Caco-2 (cell line): ENCODE measurements at regions of chr1 and their contacts with region 1.

Region 1: DNA sequence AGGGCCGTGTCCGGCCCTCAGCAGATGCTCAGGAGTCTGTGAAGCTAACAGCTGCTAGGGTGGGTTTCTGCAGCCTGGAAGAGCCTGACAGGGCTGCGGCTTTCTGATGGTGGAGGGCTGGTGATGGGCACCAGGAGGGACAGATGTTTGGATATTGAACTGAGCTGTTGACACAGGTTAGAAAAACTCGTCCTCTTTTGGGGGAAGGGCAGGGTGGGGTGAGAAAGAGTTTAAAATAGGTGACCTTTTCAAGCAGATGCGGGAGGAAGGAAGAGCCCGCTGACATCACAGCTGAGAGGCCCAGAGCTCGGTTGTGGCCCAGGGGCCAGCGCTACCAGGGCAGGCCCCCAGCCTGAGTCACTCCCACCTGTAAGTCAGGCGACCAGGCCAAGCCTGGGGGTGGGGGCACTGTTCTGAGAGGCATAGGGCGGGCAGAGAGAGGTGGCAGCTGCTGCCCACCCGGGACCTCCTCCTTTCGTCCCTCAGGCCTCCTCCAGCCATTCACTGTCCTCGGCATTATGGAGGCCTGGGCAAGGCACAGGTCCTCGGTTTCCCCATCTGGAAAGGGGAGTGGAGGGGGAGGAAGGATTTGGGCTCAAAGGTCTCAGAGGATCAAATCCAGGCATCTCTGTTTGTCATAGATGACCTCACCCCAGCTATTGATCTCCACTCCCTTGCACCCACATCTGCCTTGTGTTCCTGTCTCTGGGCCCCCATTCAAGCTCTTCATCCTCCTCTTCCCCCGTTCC is 32.3 kb upstream of the ID3 start:
- DNase-seq: no peak
- H3K4me3 ChIP-seq: no peak overlapping the region
- H3K4me3 Mint-ChIP-seq: no peak overlapping the region
- H3K27ac Mint-ChIP-seq: peak overlapping the region; percentile 13
- H3K4me1 ChIP-seq: peaks cover 12% of the 10 kb centered on the region; the same call in 1 of the 2 replicates
- H3K4me1 Mint-ChIP-seq: peaks cover 10% of the 10 kb centered on the region
- H3K27me3 ChIP-seq: no peaks in the 10 kb centered on the region
- H3K27me3 Mint-ChIP-seq: no peaks in the 10 kb centered on the region
- CTCF ChIP-seq: no peak

Region 2: DNA sequence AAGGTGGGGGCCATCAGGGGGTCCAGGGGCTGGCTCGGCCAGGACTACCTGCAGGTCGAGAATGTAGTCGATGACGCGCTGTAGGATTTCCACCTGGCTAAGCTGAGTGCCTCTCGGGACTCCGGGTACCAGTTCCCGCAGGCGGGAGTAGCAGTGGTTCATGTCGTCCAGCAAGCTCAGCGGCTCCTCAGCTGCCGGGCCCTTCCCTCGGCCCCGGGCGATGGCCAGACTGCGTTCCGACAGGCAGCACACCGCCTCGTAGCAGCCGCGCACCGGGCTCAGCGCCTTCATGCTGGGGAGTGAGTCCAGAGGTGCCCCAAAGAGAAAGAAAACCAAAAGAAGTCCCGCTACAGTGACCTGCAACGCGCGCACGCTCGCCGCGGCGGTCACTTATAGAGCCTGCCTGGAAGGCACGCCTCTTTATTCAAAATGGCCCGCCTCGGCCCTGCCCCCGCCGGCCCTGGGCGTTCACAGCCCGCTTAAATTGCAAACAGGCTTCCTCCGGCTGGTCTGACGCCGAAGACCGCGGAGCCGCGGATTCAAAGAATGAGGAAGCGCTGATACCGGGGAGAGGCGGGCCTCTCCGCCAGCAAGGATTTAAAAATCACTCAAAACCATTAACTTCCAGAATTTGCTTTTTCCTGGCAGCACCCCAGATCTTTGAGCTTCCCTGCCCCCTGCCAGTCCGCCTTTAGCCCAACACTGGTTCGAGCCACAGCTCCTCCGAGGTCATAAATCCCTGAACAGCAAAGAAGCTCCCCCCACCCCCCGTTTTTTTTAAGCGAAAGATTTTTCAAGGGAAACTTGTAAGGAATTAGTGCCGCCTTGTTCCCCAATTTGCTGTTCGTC is 32.3 kb before region 1 on chr1 and contains the start of gene ID3:
- CTCF ChIA-PET with region 1: interaction called, 3 read pairs
- POLR2A ChIA-PET with region 1: interaction called, 3 read pairs
- intact Hi-C with region 1: loop called (anchors 5 kb)
- DNase-seq: peak; percentile 92 to 94
- H3K4me3 ChIP-seq: peak within 1 kb of the TSS; percentile 68
- H3K4me3 Mint-ChIP-seq: peak within 1 kb of the TSS; percentile 87
- H3K27ac Mint-ChIP-seq: peak within 1 kb of the TSS; percentile 97
- H3K4me1 ChIP-seq: peaks cover 71% of the 10 kb centered on the region
- H3K4me1 Mint-ChIP-seq: peaks cover 46% of the 10 kb centered on the region
- H3K27me3 ChIP-seq: no peaks in the 10 kb centered on the region
- H3K27me3 Mint-ChIP-seq: no peaks in the 10 kb centered on the region
- CTCF ChIP-seq: no peak
- total RNA-seq, gene ID3: 13.7 and 18.0 TPM in 2 replicates

Region 3: DNA sequence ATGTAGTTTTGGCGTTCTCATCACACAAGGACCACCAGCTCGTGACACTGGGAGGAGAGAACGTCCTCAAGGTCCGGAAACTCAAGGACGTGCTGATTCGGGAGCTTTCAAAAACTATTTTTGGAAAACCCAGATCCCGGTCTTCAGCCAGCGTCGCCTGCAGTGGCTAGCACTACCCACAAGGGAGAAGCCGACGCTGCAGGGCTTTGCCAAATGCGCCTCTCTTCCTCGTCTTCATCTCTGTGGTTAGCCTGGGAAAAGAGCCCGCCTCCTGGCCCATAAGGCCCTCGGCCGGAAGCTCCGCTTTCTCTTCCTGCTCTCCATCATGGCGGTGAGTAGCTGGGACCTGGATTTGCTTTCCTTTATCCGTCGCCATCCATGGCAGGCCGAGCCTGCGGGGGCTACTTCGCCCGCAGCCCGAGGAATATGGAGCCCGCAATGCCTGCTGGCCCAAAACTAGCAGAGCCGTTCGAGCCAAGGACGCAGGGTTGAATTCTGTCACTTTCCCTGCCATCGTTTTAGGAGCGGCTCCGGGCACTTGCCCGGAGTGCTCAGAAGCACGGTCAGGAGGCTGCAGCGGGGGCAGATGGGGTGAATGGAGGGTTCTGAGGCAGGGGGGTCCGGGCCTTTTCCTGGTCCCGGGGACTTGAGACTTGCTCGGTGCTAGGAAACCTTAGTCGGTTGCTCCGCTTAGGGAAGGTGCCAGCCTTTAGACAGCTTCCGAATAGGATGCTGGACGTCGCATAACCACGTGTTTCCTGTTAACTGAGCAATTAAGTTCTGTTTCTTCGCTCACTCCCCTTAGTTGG is 100.1 kb after region 1 on chr1 and contains the start of gene RPL11:
- CTCF ChIA-PET with region 1: no interaction called
- POLR2A ChIA-PET with region 1: no interaction called
- intact Hi-C with region 1: no loop called
- DNase-seq: peak; percentile 89 to 91
- H3K4me3 ChIP-seq: peak within 1 kb of the TSS; percentile 54
- H3K4me3 Mint-ChIP-seq: peak within 1 kb of the TSS; percentile 78
- H3K27ac Mint-ChIP-seq: peak within 1 kb of the TSS; percentile 85
- H3K4me1 ChIP-seq: peaks cover 13% of the 10 kb centered on the region
- H3K4me1 Mint-ChIP-seq: peaks cover 26% of the 10 kb centered on the region
- H3K27me3 ChIP-seq: no peaks in the 10 kb centered on the region
- H3K27me3 Mint-ChIP-seq: no peaks in the 10 kb centered on the region
- CTCF ChIP-seq: peak; percentile 49 to 77
- total RNA-seq, gene RPL11: 1,040 and 1,063 TPM in 2 replicates